ENCODE measurements at regions of chr16 and their contacts with region 1.

Region 1: GRCh38 chr16:85717393-85718121 is 28.8 kb upstream of the GINS2 start:
- DNase-seq: peak; percentile 64 to 72
- H3K4me3 ChIP-seq: no peak overlapping the region
- H3K27ac ChIP-seq: no peak overlapping the region
- H3K4me1 ChIP-seq: peaks cover 0 to 12% of the 10 kb centered on the region in 2 donors
- H3K27me3 ChIP-seq: no peaks in the 10 kb centered on the region
- CTCF ChIP-seq: peak; percentile 45 to 78 (median 70)
- POLR2A ChIP-seq: no peak

Region 2: DNA sequence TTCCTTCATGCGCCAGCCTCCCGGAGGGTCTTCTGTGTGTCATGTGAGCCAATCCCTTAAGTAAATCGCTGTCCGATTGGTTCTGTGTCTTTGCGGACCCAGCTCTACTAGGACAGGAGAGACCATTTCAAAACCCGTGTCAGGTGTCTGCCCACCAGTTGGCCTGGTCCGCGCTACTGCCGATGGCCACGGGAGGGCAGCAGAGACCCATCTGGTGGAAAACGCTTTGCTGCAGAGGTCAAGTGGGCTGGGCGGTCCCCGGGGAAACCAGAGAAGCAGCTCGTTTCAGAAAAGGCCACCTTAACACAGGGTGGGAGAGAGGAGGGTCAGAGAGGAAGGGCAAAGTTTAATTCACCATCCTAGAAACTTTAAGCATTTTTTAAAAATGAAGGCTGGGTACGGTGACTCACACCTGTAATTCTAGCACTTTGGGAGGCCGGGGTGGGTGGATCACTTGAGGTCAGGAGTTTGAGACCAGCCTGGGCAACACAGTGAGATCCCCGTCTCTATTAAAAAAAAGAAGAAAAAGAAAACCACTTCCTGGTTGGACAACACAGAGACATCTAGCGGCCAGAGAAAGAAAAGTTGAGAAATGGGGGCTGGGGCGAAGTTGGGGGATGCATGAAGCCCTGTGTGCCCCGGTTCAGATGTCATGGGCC is 602.5 kb before region 1 on chr16:
- intact Hi-C with region 1: loop called (anchors 10 kb)
- DNase-seq: peak; percentile 90 to 91
- H3K4me3 ChIP-seq: no peak overlapping the region
- H3K27ac ChIP-seq: no peak overlapping the region
- H3K4me1 ChIP-seq: peaks cover 0 to 8% of the 10 kb centered on the region in 2 donors
- H3K27me3 ChIP-seq: no peaks in the 10 kb centered on the region
- CTCF ChIP-seq: peak; percentile 87 to 99 (median 98)
- POLR2A ChIP-seq: no peak

Region 3: DNA sequence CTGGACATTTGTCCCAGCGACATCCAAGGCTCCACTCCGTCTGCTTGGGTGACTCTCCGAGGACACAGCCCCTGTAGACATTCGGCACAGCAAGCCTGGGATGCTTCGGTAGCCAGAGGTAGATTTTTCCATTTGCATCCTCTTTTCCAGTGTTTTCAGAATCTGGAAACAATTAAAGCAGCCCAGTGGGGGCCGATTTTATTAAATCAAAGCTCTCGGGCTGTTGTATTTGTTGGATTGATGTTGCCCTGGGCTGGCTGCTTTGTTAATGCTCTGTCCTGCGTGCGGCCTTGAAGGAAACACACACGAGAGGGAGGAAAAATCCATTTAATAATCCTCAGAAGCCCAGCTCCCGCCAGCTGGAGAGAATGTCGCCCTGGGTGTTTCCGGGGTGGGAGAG is 447.2 kb before region 1 on chr16:
- intact Hi-C with region 1: loop called (anchors 2 kb)
- DNase-seq: no peak
- H3K4me3 ChIP-seq: no peak overlapping the region
- H3K27ac ChIP-seq: no peak overlapping the region
- H3K4me1 ChIP-seq: no peaks in the 10 kb centered on the region
- H3K27me3 ChIP-seq: no peaks in the 10 kb centered on the region
- CTCF ChIP-seq: no peak
- POLR2A ChIP-seq: no peak

Region 4: GRCh38 chr16:85393674-85394483 is 323.7 kb before region 1 on chr16:
- intact Hi-C with region 1: loop called (anchors 10 kb)
- DNase-seq: peak; percentile 59 to 65
- H3K4me3 ChIP-seq: no peak overlapping the region
- H3K27ac ChIP-seq: no peak overlapping the region
- H3K4me1 ChIP-seq: peaks cover 9 to 29% of the 10 kb centered on the region in 2 donors
- H3K27me3 ChIP-seq: no peaks in the 10 kb centered on the region
- CTCF ChIP-seq: peak; percentile 54 to 90 (median 73)
- POLR2A ChIP-seq: no peak

Region 5: DNA sequence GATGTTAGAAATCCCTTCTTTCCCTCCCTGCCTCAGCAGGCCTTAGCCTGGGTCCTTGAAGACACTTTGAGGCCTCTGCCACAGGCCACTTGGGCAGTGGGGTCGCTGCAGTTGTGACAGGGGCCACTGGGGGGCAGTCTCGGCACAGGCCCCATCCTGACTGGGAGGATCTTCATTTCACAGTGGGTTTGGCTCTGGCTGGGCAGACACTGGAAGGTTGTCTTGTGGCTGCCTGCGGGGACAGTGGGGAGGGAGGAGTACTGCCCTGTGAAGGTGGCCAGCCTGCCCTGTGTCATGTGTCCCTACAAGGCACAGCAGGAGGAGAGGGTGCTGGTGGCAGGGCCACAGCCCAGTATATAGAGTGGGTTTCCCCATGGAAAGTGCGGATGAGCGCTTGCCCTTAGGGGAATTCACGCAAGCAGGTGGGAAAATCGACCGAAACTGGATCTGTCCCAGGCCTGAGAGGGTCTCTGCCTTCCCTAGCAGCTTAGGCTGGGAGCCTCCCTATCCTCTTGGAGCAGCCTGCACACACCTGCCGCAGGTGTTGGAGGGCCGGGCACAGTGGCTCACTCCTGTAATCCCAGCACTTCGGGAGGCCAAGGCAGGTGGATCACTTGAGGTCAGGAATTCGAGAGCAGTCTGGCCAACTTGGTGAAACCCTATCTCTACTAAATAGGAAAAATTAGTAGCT is 57.6 kb before region 1 on chr16:
- intact Hi-C with region 1: loop called (anchors 5 kb)
- DNase-seq: peak; percentile 71 to 73
- H3K4me3 ChIP-seq: no peak overlapping the region
- H3K27ac ChIP-seq: peak overlapping the region in 2 of 3 donors; percentile 32 to 45
- H3K4me1 ChIP-seq: peaks cover 10 to 19% of the 10 kb centered on the region in 2 donors
- H3K27me3 ChIP-seq: no peaks in the 10 kb centered on the region
- CTCF ChIP-seq: peak; percentile 72 to 91 (median 80)
- POLR2A ChIP-seq: peak in 1 of 2 donors; percentile 11

Measured in thyroid gland (tissue), 4 donors.